Endothelial cell of umbilical vein (primary cell): ENCODE measurements at regions of chr2 and their contacts with region 1.

Region 1: GRCh38 chr2:149597668-149598326 is 10.2 kb upstream of the MMADHC start:
- DNase-seq: peak; percentile 87
- H3K4me3 ChIP-seq: peak overlapping the region in 1 of 3 experiments; percentile 30
- H3K27ac ChIP-seq: peak overlapping the region; percentile 81
- H3K4me1 ChIP-seq: peaks cover 7% of the 10 kb centered on the region
- H3K27me3 ChIP-seq: no peaks in the 10 kb centered on the region
- CTCF ChIP-seq: peak; percentile 60 to 91
- POLR2A ChIP-seq: no peak

Region 2: DNA sequence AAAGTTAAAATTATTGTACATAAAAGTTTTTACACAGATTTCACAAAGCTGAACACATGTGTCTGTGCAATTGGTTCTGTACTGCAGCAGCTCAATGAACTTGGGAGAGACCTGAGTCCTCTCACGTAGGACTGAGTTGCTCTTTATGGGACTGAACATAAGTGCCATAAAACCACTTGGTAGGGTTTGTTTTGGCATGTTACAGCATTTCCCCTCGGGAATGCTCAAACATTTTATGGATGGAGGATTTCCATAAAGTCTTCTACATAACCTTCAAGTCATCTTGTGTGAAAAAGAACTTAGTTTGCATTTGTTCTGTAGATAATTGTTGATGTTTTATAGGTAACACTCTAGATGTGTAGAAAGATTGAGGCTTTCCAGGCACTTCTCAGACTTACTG is 251.5 kb before region 1 on chr2:
- CTCF ChIA-PET with region 1: no interaction called
- POLR2A ChIA-PET with region 1: no interaction called
- dilution Hi-C with region 1: no loop called
- intact Hi-C with region 1: no loop called
- DNase-seq: no peak
- H3K4me3 ChIP-seq: no peak overlapping the region
- H3K27ac ChIP-seq: no peak overlapping the region
- H3K4me1 ChIP-seq: no peaks in the 10 kb centered on the region
- H3K27me3 ChIP-seq: no peaks in the 10 kb centered on the region
- CTCF ChIP-seq: no peak
- POLR2A ChIP-seq: no peak

Region 3: DNA sequence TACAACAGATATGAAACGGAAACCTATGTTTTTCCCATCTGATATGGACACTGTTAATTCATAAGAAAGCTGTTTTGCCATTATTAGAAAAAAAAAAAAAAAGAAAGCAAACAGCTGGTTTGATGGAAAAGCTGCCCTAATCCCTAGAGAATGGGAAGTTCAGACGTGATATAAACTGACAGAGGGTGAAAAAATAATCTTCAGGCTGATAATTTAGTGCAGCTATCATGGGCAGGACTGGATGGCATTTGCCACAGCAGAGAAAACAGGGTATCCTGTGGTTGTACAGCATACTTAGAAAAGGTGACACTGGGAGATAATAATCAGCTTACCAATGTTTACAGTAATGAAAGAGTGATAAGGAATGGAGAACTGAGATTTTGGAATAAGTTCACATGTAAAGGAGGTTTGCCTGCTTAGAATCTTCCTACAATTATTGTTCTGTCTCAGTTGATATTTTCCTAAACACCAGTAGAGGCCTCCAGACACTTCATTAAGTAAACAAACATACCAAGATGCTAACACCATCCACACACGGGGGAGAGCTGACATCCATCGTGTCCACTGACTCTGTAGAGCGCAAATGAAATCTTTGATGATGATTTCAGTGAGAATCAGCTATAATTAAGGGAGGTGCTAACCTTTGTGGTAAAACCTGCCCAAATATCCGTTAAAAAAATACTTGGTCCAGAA is 201.4 kb after region 1 on chr2:
- CTCF ChIA-PET with region 1: interaction called, 5 read pairs
- POLR2A ChIA-PET with region 1: no interaction called
- dilution Hi-C with region 1: no loop called
- intact Hi-C with region 1: loop called (anchors 2 kb)
- DNase-seq: peak; percentile 52
- H3K4me3 ChIP-seq: no peak overlapping the region
- H3K27ac ChIP-seq: no peak overlapping the region
- H3K4me1 ChIP-seq: peaks cover 6% of the 10 kb centered on the region
- H3K27me3 ChIP-seq: no peaks in the 10 kb centered on the region
- CTCF ChIP-seq: peak; percentile 15 to 34
- POLR2A ChIP-seq: no peak

Region 4: DNA sequence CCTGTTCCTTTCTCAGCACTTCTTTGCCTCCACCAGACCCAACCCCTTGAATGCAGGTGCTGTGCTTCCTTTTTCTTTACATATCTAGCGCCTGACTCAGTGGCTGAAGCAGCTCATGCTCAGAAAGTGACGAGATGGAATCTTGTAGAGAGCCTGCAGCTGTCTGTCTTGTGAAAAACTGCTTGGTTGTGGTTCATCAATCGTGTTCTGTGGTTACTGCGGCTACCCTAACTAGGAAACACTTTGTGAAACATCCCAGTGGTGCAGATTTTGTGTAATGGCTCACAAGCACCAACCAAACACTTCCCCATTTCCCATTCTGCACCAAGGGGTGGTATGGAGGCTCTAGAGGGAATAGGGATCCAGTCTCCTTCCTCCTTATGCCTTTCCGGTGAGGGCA is 297.0 kb after region 1 on chr2:
- CTCF ChIA-PET with region 1: no interaction called
- POLR2A ChIA-PET with region 1: no interaction called
- dilution Hi-C with region 1: no loop called
- intact Hi-C with region 1: no loop called
- DNase-seq: no peak
- H3K4me3 ChIP-seq: no peak overlapping the region
- H3K27ac ChIP-seq: no peak overlapping the region
- H3K4me1 ChIP-seq: no peaks in the 10 kb centered on the region
- H3K27me3 ChIP-seq: no peaks in the 10 kb centered on the region
- CTCF ChIP-seq: no peak
- POLR2A ChIP-seq: no peak

Region 5: GRCh38 chr2:150133623-150134022 is 535.8 kb after region 1 on chr2:
- CTCF ChIA-PET with region 1: no interaction called
- POLR2A ChIA-PET with region 1: no interaction called
- dilution Hi-C with region 1: no loop called
- intact Hi-C with region 1: loop called (anchors 2 kb)
- DNase-seq: peak; percentile 97
- H3K4me3 ChIP-seq: no peak overlapping the region
- H3K27ac ChIP-seq: peak overlapping the region; percentile 90
- H3K4me1 ChIP-seq: peaks cover 17% of the 10 kb centered on the region
- H3K27me3 ChIP-seq: no peaks in the 10 kb centered on the region
- CTCF ChIP-seq: no peak
- POLR2A ChIP-seq: peak; percentile 38

Region 6: DNA sequence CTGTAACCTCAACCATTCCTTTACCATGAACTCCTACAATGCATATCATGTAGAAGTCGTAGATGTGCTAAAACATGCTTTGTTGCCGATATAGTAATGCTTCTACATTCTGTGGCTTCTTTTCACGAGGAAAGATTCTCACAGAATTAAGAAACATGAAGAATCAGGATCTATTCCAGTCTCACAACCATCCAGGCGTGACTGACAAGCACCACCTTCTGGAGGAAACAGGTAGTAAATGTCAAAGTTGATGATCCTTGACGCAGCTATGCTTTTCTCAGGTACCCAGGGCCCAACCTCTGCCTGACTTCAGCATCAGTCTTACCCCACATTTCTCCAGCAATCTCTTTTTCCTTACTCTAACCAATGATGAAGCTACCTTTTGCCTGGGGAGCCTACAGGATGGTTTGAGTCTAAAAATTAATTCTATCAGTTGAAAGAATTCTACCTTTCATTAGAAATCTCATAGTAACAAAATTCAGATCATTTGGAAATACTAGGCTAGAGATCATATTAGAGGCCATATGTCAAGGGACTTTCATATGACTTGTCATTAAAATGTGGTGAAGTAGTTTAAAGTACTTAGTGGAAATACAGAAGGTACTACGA is 1013.0 kb after region 1 on chr2:
- CTCF ChIA-PET with region 1: interaction called, 5 read pairs
- POLR2A ChIA-PET with region 1: no interaction called
- dilution Hi-C with region 1: no loop called
- intact Hi-C with region 1: loop called (anchors 1 kb)
- DNase-seq: peak; percentile 45
- H3K4me3 ChIP-seq: no peak overlapping the region
- H3K27ac ChIP-seq: no peak overlapping the region
- H3K4me1 ChIP-seq: peaks cover 8% of the 10 kb centered on the region
- H3K27me3 ChIP-seq: no peaks in the 10 kb centered on the region
- CTCF ChIP-seq: peak; percentile 31 to 34
- POLR2A ChIP-seq: no peak

Region 7: GRCh38 chr2:151051574-151052220 is 1453.9 kb after region 1 on chr2:
- CTCF ChIA-PET with region 1: interaction called, 50 read pairs
- POLR2A ChIA-PET with region 1: no interaction called
- dilution Hi-C with region 1: no loop called
- intact Hi-C with region 1: loop called (anchors 1 kb)
- DNase-seq: peak; percentile 69
- H3K4me3 ChIP-seq: no peak overlapping the region
- H3K27ac ChIP-seq: no peak overlapping the region
- H3K4me1 ChIP-seq: no peaks in the 10 kb centered on the region
- H3K27me3 ChIP-seq: no peaks in the 10 kb centered on the region
- CTCF ChIP-seq: peak; percentile 62 to 73
- POLR2A ChIP-seq: no peak